Activated CD4-positive, alpha-beta T cell treated with anti-CD3 and anti-CD28 coated beads for 36 hours (primary cell): ENCODE measurements at regions of chr4 and their contacts with region 1.

Region 1: DNA sequence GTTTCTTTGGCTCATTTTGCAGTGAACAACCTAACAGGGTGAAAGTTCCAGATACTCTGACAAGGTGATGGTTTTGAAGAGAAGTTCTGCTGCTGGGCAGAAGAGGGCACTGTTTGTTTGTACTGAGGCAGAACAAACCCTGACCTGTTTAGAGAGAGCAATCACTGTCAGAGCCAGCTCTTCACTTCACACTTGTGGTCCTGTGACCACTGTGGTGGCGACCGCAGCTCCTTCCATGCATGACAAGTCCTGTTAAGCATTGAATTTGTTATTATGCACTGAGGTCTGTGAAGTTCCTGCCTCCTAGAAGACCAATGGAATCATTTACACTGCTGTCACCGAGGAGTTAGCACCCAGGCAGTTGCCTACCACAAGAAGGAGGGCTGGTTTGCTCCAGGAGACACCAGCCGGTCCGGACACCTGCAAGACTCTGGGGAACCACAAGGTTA is 86.6 kb downstream of the ZNF330 start:
- DNase-seq: peak; percentile 86
- ATAC-seq: peak; percentile 91
- H3K4me3 Mint-ChIP-seq: no peak overlapping the region
- H3K27ac Mint-ChIP-seq: no peak overlapping the region
- H3K4me1 Mint-ChIP-seq: peaks cover 3% of the 10 kb centered on the region
- H3K27me3 Mint-ChIP-seq: peaks cover 3% of the 10 kb centered on the region

Region 2: GRCh38 chr4:141294306-141294705 is 13.0 kb before region 1 on chr4:
- CTCF ChIA-PET with region 1: interaction called, 11 read pairs
- POLR2A ChIA-PET with region 1: no interaction called
- intact Hi-C with region 1: no loop called
- DNase-seq: no peak
- ATAC-seq: no peak
- H3K4me3 Mint-ChIP-seq: no peak overlapping the region
- H3K27ac Mint-ChIP-seq: no peak overlapping the region
- H3K4me1 Mint-ChIP-seq: no peaks in the 10 kb centered on the region
- H3K27me3 Mint-ChIP-seq: peaks cover 12% of the 10 kb centered on the region

Region 3: DNA sequence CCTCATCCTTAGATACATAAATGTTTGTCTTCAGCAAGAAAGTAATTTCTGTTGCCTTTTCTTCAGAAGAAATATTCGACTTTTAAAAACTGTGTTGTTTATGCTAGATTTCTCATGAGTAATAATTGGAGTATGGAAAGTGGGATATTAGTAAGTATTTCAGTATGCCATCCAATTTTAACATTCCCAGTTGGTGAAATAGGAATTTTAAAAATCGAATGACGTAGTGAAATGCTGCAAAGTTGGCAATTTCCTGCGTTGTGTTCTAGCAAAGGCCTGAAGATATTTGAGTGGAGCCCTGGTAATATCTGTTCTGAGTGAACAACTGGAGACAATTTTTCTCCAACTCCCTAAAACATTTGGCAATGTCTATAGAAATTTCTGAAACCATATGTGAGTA is 103.6 kb after region 1 on chr4:
- CTCF ChIA-PET with region 1: no interaction called
- POLR2A ChIA-PET with region 1: no interaction called
- intact Hi-C with region 1: no loop called
- DNase-seq: no peak
- ATAC-seq: no peak
- H3K4me3 Mint-ChIP-seq: no peak overlapping the region
- H3K27ac Mint-ChIP-seq: no peak overlapping the region
- H3K4me1 Mint-ChIP-seq: no peaks in the 10 kb centered on the region
- H3K27me3 Mint-ChIP-seq: no peaks in the 10 kb centered on the region

Region 4: DNA sequence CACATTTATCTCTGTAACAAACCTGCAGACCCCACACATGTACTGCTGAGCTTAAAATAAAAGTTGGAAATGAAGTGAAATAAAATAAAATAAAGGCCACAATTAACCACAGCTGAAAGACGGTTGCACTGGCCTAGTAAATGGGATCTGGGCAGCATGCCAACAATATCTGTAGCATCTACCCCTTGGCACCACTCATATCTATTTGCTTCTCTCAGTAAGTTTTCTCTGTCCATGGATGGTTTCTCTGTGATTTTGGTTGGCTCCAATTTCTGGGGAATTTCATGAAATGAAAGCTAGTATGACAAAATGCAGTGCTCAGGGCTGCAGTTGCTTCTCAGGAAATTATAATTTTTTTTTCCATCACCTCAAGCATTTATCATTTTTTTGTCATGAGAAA is 157.1 kb after region 1 on chr4:
- CTCF ChIA-PET with region 1: no interaction called
- POLR2A ChIA-PET with region 1: no interaction called
- intact Hi-C with region 1: no loop called
- DNase-seq: no peak
- ATAC-seq: no peak
- H3K4me3 Mint-ChIP-seq: no peak overlapping the region
- H3K27ac Mint-ChIP-seq: no peak overlapping the region
- H3K4me1 Mint-ChIP-seq: no peaks in the 10 kb centered on the region
- H3K27me3 Mint-ChIP-seq: no peaks in the 10 kb centered on the region

Region 5: GRCh38 chr4:141711014-141711610 is 403.8 kb after region 1 on chr4:
- CTCF ChIA-PET with region 1: no interaction called
- POLR2A ChIA-PET with region 1: no interaction called
- intact Hi-C with region 1: loop called in 1 of 2 experiments (anchors 5 kb)
- DNase-seq: no peak
- ATAC-seq: no peak
- H3K4me3 Mint-ChIP-seq: no peak overlapping the region
- H3K27ac Mint-ChIP-seq: no peak overlapping the region
- H3K4me1 Mint-ChIP-seq: no peaks in the 10 kb centered on the region
- H3K27me3 Mint-ChIP-seq: no peaks in the 10 kb centered on the region

Region 6: DNA sequence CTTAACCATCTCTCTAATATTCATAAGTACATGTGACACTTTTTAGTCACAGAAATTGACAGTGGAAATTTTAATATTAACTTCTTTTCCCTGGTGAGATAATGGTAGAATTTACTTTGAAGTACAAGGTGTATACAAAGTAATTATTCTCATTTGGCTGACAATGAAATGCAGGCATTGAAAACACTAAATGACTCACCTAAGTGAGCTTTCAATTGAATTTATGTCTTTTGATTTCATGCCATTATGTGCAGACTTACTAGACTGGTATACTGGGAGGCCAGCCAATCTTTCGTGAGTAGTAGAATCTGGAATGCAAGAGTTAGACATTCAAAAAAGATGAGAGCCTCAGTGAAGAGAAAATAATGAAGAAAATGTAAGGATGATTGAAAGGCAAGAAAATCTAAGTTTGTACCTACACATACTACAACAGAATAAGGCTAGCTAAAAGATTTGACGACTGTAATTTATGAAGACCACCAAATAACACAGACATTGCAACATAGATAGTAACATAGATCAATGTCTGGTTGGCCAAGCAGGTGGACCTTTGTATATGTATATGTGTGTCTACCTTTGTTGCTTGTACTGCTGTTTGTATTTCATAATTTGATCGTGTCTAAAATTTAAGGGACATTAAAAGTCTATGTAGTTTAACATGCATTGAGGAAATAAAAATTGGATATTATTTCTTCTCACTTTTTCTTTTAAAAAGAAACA is 788.8 kb after region 1 on chr4:
- CTCF ChIA-PET with region 1: no interaction called
- POLR2A ChIA-PET with region 1: no interaction called
- intact Hi-C with region 1: loop called in 1 of 2 experiments (anchors 10 kb)
- DNase-seq: no peak
- ATAC-seq: no peak
- H3K4me3 Mint-ChIP-seq: no peak overlapping the region
- H3K27ac Mint-ChIP-seq: no peak overlapping the region
- H3K4me1 Mint-ChIP-seq: peaks cover 5% of the 10 kb centered on the region
- H3K27me3 Mint-ChIP-seq: no peaks in the 10 kb centered on the region